CD4-positive, alpha-beta memory T cell (primary cell): ENCODE measurements at regions of chr17 and their contacts with region 1.

Region 1: GRCh38 chr17:4986951-4987766 is at the start of gene CAMTA2:
- DNase-seq: peak; percentile 78 to 90 (median 81)
- H3K4me3 ChIP-seq: peak within 1 kb of the TSS; percentile 74 to 95
- H3K4me3 Mint-ChIP-seq: peak within 1 kb of the TSS; percentile 92 to 95 (median 93)
- H3K27ac ChIP-seq: peak within 1 kb of the TSS; percentile 85
- H3K27ac Mint-ChIP-seq: peak within 1 kb of the TSS; percentile 94 to 98 (median 96)
- H3K4me1 ChIP-seq: peaks cover 29% of the 10 kb centered on the region
- H3K4me1 Mint-ChIP-seq: peaks cover 29 to 64% (median 37%) of the 10 kb centered on the region in 4 donors
- H3K27me3 ChIP-seq: no peaks in the 10 kb centered on the region
- H3K27me3 Mint-ChIP-seq: no peaks in the 10 kb centered on the region
- total RNA-seq, gene CAMTA2: 63.0 to 84.8 TPM

Region 2: DNA sequence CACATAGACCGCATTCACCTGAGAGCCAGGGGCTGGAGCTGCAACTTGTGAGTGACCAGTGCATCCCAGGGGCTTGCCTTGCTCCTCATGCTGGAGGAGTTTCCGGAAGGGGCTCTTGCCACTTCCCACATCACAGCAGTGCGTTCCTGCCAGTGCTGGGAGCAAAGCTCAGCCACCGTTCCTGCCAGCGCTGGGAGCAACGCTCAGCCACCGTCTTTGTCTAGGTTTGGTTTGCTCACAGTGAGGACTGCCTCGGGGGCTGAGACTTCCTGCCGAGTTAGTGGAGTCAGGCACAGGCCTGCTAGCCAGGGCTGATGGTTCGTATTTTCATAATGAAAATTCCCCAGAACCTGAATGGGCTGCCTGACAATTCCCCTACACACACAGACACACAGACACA is 78.9 kb before region 1 on chr17:
- CTCF ChIA-PET with region 1: interaction called, 41 read pairs
- POLR2A ChIA-PET with region 1: interaction called, 7 read pairs
- intact Hi-C with region 1: loop called (anchors 1 kb)
- DNase-seq: no peak
- H3K4me3 ChIP-seq: no peak overlapping the region
- H3K4me3 Mint-ChIP-seq: no peak overlapping the region
- H3K27ac ChIP-seq: peak overlapping the region; percentile 5
- H3K27ac Mint-ChIP-seq: no peak overlapping the region
- H3K4me1 ChIP-seq: peaks cover 22% of the 10 kb centered on the region
- H3K4me1 Mint-ChIP-seq: peaks cover 4 to 11% (median 6%) of the 10 kb centered on the region in 4 donors
- H3K27me3 ChIP-seq: no peaks in the 10 kb centered on the region
- H3K27me3 Mint-ChIP-seq: no peaks in the 10 kb centered on the region

Region 3: DNA sequence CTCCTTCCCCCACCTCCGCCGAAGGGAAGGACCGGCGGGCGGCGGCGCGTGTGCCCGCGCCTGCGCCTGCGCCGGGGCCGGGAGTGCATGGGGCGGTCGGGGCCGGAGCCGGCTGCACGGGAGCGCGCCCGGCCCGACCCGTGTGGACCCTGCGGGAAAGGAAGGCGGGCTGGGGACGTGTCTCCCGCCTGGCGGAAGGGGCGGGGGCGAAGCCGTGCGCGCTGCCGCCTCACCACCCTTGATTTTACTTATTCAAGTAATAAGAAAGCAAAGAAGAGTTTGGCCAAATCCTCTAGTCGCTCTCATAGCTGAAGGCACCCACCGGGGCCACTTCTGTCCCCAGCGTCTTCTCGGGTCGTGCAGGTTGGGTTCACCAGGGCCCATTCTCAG is 38.2 kb before region 1 on chr17:
- CTCF ChIA-PET with region 1: interaction called, 5 read pairs
- POLR2A ChIA-PET with region 1: interaction called, 36 read pairs
- intact Hi-C with region 1: no loop called
- DNase-seq: peak in 4 of 5 donors; percentile 78 to 82 (median 80)
- H3K4me3 ChIP-seq: peak overlapping the region; percentile 61 to 94
- H3K4me3 Mint-ChIP-seq: peak overlapping the region; percentile 95 to 100 (median 99)
- H3K27ac ChIP-seq: peak overlapping the region; percentile 94
- H3K27ac Mint-ChIP-seq: peak overlapping the region; percentile 92 to 100 (median 98)
- H3K4me1 ChIP-seq: peaks cover 43% of the 10 kb centered on the region
- H3K4me1 Mint-ChIP-seq: peaks cover 24 to 63% (median 39%) of the 10 kb centered on the region in 4 donors
- H3K27me3 ChIP-seq: no peaks in the 10 kb centered on the region
- H3K27me3 Mint-ChIP-seq: no peaks in the 10 kb centered on the region

Region 4: DNA sequence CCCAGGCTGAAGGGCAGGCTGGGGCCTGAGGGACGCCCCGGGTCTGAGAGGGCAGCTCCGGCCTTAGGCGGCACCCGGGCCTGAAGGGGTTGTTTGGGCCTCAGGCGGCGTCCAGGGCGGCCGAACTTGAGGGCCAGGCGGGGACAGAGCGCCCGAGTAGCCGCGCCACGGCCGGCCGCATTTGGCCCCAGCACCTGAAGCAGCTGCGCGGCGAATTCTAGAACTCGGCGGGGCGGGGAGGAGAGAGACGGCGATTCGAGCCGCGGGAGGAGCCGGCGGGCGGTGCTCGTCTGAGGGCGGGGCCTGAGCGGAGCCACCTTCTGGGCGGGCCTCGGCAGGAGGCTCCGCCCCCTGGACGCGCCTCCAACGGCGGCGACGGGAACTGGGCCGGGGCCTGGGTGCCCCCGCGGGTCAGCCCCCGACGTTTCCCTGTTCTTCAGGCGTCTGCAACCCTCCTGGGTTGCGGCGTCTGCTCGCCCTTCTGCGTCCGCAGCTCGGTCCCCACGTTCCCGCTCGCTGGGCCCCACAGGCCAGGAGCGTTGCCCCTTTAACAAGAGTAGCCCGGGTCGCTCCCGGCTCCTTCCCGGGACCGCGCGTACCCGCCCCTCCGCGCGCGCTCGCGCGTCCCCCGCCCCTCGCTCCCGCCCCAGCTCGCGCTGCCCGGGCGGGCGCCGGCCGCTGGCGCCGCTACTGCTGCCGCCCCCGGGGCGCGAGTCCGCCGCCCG is 10.3 kb after region 1 on chr17 and contains the starts of genes INCA1 and KIF1C:
- CTCF ChIA-PET with region 1: interaction called, 16 read pairs
- POLR2A ChIA-PET with region 1: interaction called, 64 read pairs
- intact Hi-C with region 1: loop called (anchors 1 kb)
- DNase-seq: peak; percentile 88 to 94 (median 92)
- H3K4me3 ChIP-seq: peak within 1 kb of the TSS; percentile 36 to 72
- H3K4me3 Mint-ChIP-seq: peak within 1 kb of the TSS; percentile 78 to 91 (median 84)
- H3K27ac ChIP-seq: peak within 1 kb of the TSS; percentile 79
- H3K27ac Mint-ChIP-seq: peak within 1 kb of the TSS; percentile 75 to 94 (median 87)
- H3K4me1 ChIP-seq: peaks cover 22% of the 10 kb centered on the region
- H3K4me1 Mint-ChIP-seq: peaks cover 10 to 42% (median 24%) of the 10 kb centered on the region in 4 donors
- H3K27me3 ChIP-seq: no peaks in the 10 kb centered on the region
- H3K27me3 Mint-ChIP-seq: no peaks in the 10 kb centered on the region
- total RNA-seq, gene INCA1: 0.36 to 0.67 TPM
- total RNA-seq, gene KIF1C: 29.8 to 36.9 TPM

Region 5: DNA sequence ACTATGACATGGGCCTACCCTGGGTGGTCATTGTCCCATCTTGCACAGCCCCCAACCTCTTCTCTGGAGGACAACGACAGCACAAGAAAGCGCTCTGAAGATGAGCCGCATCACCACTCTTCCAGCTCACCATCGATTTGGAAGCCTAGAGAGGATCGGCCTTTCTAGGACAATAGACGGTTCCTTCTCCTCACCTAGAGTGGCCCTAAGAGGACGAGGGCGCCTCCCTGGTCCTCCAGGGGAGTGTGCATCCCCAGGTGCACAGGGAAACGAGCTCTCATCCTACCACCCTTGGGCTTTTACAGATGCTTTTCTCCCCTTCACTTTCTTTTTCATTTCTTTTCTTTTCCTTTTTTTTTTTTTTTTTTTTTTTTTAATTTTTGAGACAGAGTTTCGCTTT is 68.4 kb after region 1 on chr17:
- CTCF ChIA-PET with region 1: interaction called, 29 read pairs
- POLR2A ChIA-PET with region 1: interaction called, 3 read pairs
- intact Hi-C with region 1: no loop called
- DNase-seq: no peak
- H3K4me3 ChIP-seq: no peak overlapping the region
- H3K4me3 Mint-ChIP-seq: no peak overlapping the region
- H3K27ac ChIP-seq: no peak overlapping the region
- H3K27ac Mint-ChIP-seq: peak overlapping the region in 2 of 7 donors; percentile 22 to 35
- H3K4me1 ChIP-seq: peaks cover 2% of the 10 kb centered on the region
- H3K4me1 Mint-ChIP-seq: peaks cover under 1 to 3% (median 1%) of the 10 kb centered on the region in 4 donors
- H3K27me3 ChIP-seq: no peaks in the 10 kb centered on the region
- H3K27me3 Mint-ChIP-seq: peaks cover 0 to 1% of the 10 kb centered on the region in 2 donors